ENCODE measurements at regions of chr7 and their contacts with region 1.

Region 1: GRCh38 chr7:158863611-158864506 is 7.5 kb downstream of the DYNC2I1 start:
- DNase-seq: peak in 8 of 14 experiments; percentile 6 to 63 (median 36)
- ATAC-seq: peak; percentile 76
- H3K4me3 ChIP-seq: peak overlapping the region; percentile 58
- H3K4me3 Mint-ChIP-seq: peak overlapping the region; percentile 98
- H3K27ac ChIP-seq: no peak overlapping the region
- H3K27ac Mint-ChIP-seq: peak overlapping the region; percentile 76
- H3K4me1 ChIP-seq: peaks cover 20% of the 10 kb centered on the region
- H3K4me1 Mint-ChIP-seq: peaks cover 61% of the 10 kb centered on the region
- H3K27me3 ChIP-seq: no peaks in the 10 kb centered on the region
- H3K27me3 Mint-ChIP-seq: no peaks in the 10 kb centered on the region
- CTCF ChIP-seq: no peak

Region 2: DNA sequence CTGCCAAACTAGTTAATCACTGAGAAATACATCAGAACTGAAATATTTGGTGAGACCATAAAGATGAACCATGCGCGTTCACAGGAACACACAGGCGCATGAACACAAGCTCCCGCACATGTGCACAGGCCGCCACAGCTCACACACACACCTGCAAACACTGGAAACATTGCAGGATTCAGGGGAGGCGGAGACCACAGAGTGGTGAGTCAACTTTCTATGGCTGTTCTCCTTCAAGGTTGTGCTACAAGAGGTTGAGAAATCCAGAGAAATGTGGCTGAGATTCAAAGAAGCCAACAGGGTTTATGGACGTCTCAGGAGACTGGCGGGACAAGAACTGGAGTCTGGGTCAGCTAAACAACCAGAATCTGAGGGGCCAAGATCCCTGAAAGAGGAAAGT is 52.4 kb before region 1 on chr7:
- CTCF ChIA-PET with region 1: interaction called, 3 read pairs
- POLR2A ChIA-PET with region 1: interaction called, 14 read pairs
- intact Hi-C with region 1: loop called in 1 of 2 experiments (anchors 5 kb)
- DNase-seq: peak in 7 of 14 experiments; percentile 33 to 66 (median 49)
- ATAC-seq: peak; percentile 13
- H3K4me3 ChIP-seq: no peak overlapping the region
- H3K4me3 Mint-ChIP-seq: peak overlapping the region; percentile 81
- H3K27ac ChIP-seq: peak overlapping the region; percentile 72 to 86
- H3K27ac Mint-ChIP-seq: peak overlapping the region; percentile 97
- H3K4me1 ChIP-seq: peaks cover 78% of the 10 kb centered on the region
- H3K4me1 Mint-ChIP-seq: peaks cover 94% of the 10 kb centered on the region
- H3K27me3 ChIP-seq: no peaks in the 10 kb centered on the region
- H3K27me3 Mint-ChIP-seq: no peaks in the 10 kb centered on the region
- CTCF ChIP-seq: no peak

Region 3: DNA sequence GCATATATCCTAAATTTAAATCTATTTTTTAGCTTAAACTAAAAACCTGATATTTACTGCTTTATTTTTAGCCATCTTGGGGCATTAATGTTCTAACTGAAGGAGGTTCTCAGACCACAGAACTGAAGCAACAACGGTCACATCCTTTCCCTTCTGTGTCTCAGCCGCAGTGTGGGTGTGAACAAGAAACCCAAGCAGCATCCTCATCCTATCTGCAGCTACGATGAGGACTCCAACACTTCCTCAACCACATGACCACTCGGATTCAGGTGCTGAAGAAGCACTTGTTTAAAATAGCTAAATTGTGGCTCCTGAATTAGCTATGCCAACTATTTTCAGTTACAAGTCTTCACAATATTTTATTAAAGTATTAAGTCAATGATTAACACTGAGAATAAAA is 39.8 kb before region 1 on chr7:
- CTCF ChIA-PET with region 1: no interaction called
- POLR2A ChIA-PET with region 1: interaction called, 21 read pairs
- intact Hi-C with region 1: no loop called
- DNase-seq: peak in 10 of 14 experiments; percentile 41 to 95 (median 58)
- ATAC-seq: peak; percentile 75
- H3K4me3 ChIP-seq: no peak overlapping the region
- H3K4me3 Mint-ChIP-seq: peak overlapping the region; percentile 84
- H3K27ac ChIP-seq: peak overlapping the region in 1 of 2 donors; percentile 53
- H3K27ac Mint-ChIP-seq: peak overlapping the region; percentile 90
- H3K4me1 ChIP-seq: peaks cover 59% of the 10 kb centered on the region
- H3K4me1 Mint-ChIP-seq: peaks cover 70% of the 10 kb centered on the region
- H3K27me3 ChIP-seq: no peaks in the 10 kb centered on the region
- H3K27me3 Mint-ChIP-seq: no peaks in the 10 kb centered on the region
- CTCF ChIP-seq: no peak

Region 4: DNA sequence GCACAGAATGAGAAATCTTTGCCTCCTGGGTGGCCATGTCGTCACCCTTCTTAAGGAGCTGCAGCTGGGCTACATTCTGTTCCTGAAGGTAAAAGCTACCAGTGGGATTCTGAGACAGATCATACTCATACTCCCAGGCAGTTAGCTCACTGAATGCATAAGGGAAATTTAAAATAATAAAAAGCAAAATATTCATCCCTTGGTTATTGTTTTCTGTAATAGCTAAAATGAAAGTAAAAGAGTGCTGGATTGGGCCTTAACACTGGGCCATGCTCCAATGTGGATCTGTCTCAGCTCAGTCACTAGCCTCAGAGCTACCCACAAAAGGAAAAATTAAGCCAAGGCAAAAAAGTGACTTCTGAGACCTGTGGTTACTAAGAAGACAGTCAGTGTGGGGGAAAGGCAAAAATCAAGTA is 16.4 kb before region 1 on chr7:
- CTCF ChIA-PET with region 1: no interaction called
- POLR2A ChIA-PET with region 1: interaction called, 10 read pairs
- intact Hi-C with region 1: no loop called
- DNase-seq: peak in 3 of 14 experiments; percentile 33 to 44 (median 38)
- ATAC-seq: peak; percentile 60
- H3K4me3 ChIP-seq: peak overlapping the region; percentile 43
- H3K4me3 Mint-ChIP-seq: peak overlapping the region; percentile 87
- H3K27ac ChIP-seq: peak overlapping the region; percentile 35 to 53
- H3K27ac Mint-ChIP-seq: peak overlapping the region; percentile 76
- H3K4me1 ChIP-seq: peaks cover 21% of the 10 kb centered on the region
- H3K4me1 Mint-ChIP-seq: peaks cover 31% of the 10 kb centered on the region
- H3K27me3 ChIP-seq: no peaks in the 10 kb centered on the region
- H3K27me3 Mint-ChIP-seq: no peaks in the 10 kb centered on the region
- CTCF ChIP-seq: no peak

Region 5: GRCh38 chr7:158910254-158911053 is 46.6 kb after region 1 on chr7:
- CTCF ChIA-PET with region 1: no interaction called
- POLR2A ChIA-PET with region 1: no interaction called
- intact Hi-C with region 1: no loop called
- DNase-seq: no peak
- ATAC-seq: no peak
- H3K4me3 ChIP-seq: no peak overlapping the region
- H3K4me3 Mint-ChIP-seq: no peak overlapping the region
- H3K27ac ChIP-seq: no peak overlapping the region
- H3K27ac Mint-ChIP-seq: no peak overlapping the region
- H3K4me1 ChIP-seq: no peaks in the 10 kb centered on the region
- H3K4me1 Mint-ChIP-seq: no peaks in the 10 kb centered on the region
- H3K27me3 ChIP-seq: no peaks in the 10 kb centered on the region
- H3K27me3 Mint-ChIP-seq: no peaks in the 10 kb centered on the region
- CTCF ChIP-seq: no peak

Region 6: GRCh38 chr7:158950914-158951635 is 87.2 kb after region 1 on chr7:
- CTCF ChIA-PET with region 1: no interaction called
- POLR2A ChIA-PET with region 1: no interaction called
- intact Hi-C with region 1: no loop called
- DNase-seq: no peak
- ATAC-seq: no peak
- H3K4me3 ChIP-seq: no peak overlapping the region
- H3K4me3 Mint-ChIP-seq: no peak overlapping the region
- H3K27ac ChIP-seq: no peak overlapping the region
- H3K27ac Mint-ChIP-seq: no peak overlapping the region
- H3K4me1 ChIP-seq: no peaks in the 10 kb centered on the region
- H3K4me1 Mint-ChIP-seq: no peaks in the 10 kb centered on the region
- H3K27me3 ChIP-seq: no peaks in the 10 kb centered on the region
- H3K27me3 Mint-ChIP-seq: no peaks in the 10 kb centered on the region
- CTCF ChIP-seq: no peak

Region 7: DNA sequence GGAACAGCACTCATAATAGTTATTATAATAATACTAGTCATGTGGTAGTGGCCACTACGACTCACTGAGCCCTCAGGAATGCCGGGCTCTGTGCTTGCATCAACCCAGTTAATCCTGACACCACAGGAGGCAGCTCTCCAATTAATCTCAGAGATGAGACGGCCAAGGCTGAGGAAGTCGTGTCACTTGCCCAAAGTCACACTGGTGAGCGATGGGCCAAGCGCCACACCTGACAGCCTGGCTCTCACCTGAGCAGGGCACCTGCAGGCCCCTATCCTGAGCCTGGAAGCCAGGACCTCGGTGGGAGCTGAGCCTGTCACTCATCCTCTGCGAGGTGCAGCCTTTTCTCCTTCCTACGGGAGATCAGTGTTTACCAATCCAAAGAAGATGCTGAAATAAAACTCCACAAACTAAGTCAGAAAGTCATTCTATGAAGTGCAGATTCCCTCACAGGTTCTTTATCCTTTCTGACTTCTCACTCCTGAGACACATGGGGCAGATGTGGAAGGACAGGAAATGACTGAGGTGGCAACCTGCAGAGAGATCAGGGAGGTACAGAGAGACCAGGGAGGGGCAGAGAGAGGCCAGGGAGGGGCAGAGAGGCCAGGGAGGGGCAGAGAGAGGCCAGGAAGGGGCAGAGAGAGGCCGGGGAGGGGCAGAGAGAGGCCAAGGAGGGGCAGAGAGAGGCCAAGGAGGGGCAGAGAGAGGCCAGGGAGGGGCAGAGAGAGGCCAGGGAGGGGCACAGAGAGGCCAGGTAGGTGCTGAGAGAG is 242.2 kb after region 1 on chr7:
- CTCF ChIA-PET with region 1: no interaction called
- POLR2A ChIA-PET with region 1: no interaction called
- intact Hi-C with region 1: no loop called
- DNase-seq: no peak
- ATAC-seq: no peak
- H3K4me3 ChIP-seq: no peak overlapping the region
- H3K4me3 Mint-ChIP-seq: no peak overlapping the region
- H3K27ac ChIP-seq: no peak overlapping the region
- H3K27ac Mint-ChIP-seq: no peak overlapping the region
- H3K4me1 ChIP-seq: no peaks in the 10 kb centered on the region
- H3K4me1 Mint-ChIP-seq: no peaks in the 10 kb centered on the region
- H3K27me3 ChIP-seq: no peaks in the 10 kb centered on the region
- H3K27me3 Mint-ChIP-seq: peaks cover 8% of the 10 kb centered on the region
- CTCF ChIP-seq: no peak

Region 8: DNA sequence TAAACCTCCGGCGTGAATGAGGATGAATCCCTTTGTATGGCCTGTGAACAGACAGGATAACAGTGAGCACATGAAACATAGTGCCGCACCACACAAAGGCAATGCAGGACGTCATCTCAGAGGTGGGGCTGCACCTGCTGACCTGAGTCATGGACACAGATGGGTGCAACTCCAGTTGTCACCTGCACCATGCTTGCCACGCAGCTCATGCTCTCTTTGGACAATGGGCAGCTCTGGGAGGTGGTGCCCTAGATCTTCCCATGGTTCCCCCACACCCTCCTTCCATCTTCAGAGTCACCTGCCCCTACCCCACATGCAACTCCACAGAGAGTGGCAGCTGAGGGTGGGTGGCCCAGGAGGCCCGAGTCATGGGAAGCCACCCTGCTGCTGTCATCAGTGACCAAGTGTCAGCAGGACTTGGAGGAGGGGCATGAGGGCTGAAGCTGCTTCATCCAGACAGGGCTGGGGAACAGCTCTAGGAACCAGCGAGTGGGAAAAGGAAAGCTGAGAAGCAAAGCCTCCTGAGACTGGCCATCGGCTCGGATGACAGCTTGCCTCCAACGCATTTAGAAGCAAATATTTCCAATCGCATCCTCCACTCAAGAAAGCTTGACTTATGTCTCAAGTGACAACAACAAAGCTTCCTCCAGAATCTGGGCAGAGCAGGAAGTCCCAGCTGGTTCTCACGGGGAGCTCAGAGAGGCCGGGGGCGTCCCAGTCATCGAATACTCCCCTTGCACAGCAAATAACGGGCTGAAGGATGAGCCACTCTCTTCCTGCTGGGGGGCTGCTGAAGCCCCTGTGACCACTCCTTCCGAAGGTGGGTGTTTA is 253.7 kb after region 1 on chr7:
- CTCF ChIA-PET with region 1: no interaction called
- POLR2A ChIA-PET with region 1: no interaction called
- intact Hi-C with region 1: no loop called
- DNase-seq: peak in 1 of 14 experiments; percentile 14
- ATAC-seq: no peak
- H3K4me3 ChIP-seq: no peak overlapping the region
- H3K4me3 Mint-ChIP-seq: no peak overlapping the region
- H3K27ac ChIP-seq: no peak overlapping the region
- H3K27ac Mint-ChIP-seq: no peak overlapping the region
- H3K4me1 ChIP-seq: peaks cover 2% of the 10 kb centered on the region
- H3K4me1 Mint-ChIP-seq: peaks cover 20% of the 10 kb centered on the region
- H3K27me3 ChIP-seq: peaks cover 3% of the 10 kb centered on the region in 2 experiments
- H3K27me3 Mint-ChIP-seq: peaks cover 12% of the 10 kb centered on the region
- CTCF ChIP-seq: no peak

Measured in CD4-positive, alpha-beta T cell (primary cell).